Lower leg skin (tissue), 4 donors: ENCODE measurements at regions of chr19 and their contacts with region 1.

Region 1: GRCh38 chr19:1975162-1975480 is 34.1 kb downstream of the CSNK1G2 start:
- DNase-seq: no peak
- H3K4me3 ChIP-seq: no peak overlapping the region
- CTCF ChIP-seq: no peak
- POLR2A ChIP-seq: no peak

Region 2: GRCh38 chr19:1223018-1223855 is 751.9 kb before region 1 on chr19:
- intact Hi-C with region 1: no loop called
- DNase-seq: no peak
- H3K4me3 ChIP-seq: no peak overlapping the region
- CTCF ChIP-seq: no peak
- POLR2A ChIP-seq: no peak

Region 3: DNA sequence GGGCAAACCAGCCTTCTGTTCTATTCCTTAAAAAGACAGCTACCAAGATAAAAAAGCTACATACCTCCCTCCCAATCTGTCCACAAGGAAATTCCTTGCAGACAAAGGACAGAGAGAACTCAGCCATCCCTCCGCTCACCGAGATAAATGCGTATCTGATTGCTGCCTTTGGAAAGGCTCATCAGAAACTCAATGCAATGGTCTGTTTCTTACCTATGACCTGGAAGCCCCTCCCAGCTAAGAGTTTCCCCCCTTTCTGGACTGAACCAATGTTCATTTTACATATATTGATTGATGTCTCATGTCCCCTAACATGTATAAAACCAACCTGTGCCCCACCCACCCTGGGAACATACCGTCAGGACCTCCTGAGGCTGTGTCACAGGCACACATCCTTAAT is 28.8 kb after region 1 on chr19:
- intact Hi-C with region 1: loop called (anchors 2 kb)
- DNase-seq: no peak
- H3K4me3 ChIP-seq: no peak overlapping the region
- CTCF ChIP-seq: no peak
- POLR2A ChIP-seq: no peak